HEK293 (cell line): ENCODE measurements at regions of chr2 and their contacts with region 1.

Region 1: GRCh38 chr2:11344342-11344955 is at the start of gene ROCK2:
- H3K4me3 ChIP-seq: peak within 1 kb of the TSS; percentile 64
- H3K27ac ChIP-seq: peak within 1 kb of the TSS; percentile 92
- H3K4me1 ChIP-seq: peaks cover 21% of the 10 kb centered on the region
- CTCF ChIP-seq: no peak

Region 2: DNA sequence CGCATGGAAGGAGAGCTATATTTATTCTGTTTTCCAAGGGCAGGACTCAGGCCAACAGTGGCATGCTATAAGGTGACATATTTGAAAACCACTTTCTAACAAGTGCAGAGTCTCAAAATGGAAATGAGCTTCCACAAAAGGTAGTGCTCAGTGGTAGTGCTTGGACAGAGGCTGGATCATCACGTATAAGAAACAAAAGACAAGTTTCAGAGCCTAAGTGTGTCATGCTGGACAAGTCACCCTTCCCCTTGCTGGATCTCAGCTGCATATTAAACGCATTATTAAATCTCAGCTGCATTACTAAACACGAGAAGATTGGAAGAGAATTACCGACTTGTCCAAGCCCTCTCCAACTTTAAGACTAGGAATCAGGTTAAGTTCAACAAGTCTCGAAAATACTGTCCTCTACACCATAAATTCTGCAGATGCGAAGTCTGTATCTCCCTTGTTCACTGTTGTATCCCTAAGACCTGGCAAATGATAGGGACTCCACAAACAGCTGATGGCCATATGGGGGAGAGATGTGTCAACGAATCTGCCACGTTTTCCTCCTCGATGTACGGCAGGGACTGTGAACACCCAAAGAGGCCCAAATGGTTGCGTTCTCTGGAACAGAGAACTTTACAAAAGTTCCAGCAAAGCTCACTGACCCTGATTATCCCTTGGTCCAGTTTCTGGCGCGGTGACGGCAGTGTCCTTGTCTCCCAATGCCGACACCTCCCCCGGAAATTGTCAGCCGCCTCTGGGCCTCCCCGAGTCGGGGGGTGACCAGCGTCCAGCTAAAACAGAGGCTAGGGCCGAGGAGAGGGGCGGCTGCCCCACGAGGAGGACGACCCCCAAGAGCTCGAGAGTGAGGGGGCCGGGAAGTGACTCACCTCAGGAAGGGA is 655.3 kb before region 1 on chr2:
- CTCF ChIA-PET with region 1: no interaction called
- POLR2A ChIA-PET with region 1: no interaction called
- H3K4me3 ChIP-seq: peak overlapping the region; percentile 84
- H3K27ac ChIP-seq: peak overlapping the region; percentile 57; the same call in 1 of the 2 replicates
- H3K4me1 ChIP-seq: peaks cover 5% of the 10 kb centered on the region; the same call in 1 of the 2 replicates
- CTCF ChIP-seq: no peak

Region 3: DNA sequence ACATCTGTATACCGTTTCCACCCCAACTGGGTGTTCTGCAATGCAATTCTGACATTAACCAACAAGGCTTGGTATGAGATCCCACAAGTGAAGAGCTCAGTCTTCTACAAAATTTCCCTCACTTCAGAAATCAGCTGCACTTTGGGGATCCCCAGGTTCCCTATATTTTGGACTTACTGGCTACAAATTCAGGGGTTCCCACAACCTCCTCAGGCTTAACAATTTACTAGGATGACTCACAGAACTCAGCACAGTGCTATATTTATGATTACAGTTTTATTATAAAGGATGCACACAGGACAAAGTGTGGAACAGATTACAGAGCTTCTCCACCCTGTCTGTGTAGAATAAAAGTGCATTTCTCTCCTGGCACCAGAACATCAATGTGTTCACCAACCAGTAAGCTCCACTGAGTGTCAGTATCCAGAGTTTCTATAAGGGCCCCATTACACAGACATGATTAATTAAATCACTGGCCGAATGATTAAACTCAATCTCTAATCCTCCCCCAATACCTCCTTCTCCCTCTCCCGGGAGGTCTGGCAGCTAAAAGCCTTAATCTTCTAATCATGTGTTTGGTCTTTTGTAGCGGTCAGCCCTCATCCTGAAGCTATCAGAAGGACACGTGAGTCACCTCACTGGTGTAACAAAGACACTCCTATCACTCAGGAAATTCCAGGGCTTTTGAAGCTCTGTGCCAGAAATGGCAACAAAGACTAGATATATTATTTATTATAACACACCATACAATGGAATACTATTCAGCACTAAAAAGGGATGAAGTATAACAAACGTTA is 104.6 kb before region 1 on chr2:
- CTCF ChIA-PET with region 1: no interaction called
- POLR2A ChIA-PET with region 1: no interaction called
- H3K4me3 ChIP-seq: no peak overlapping the region
- H3K27ac ChIP-seq: no peak overlapping the region
- H3K4me1 ChIP-seq: no peaks in the 10 kb centered on the region
- CTCF ChIP-seq: no peak

Region 4: DNA sequence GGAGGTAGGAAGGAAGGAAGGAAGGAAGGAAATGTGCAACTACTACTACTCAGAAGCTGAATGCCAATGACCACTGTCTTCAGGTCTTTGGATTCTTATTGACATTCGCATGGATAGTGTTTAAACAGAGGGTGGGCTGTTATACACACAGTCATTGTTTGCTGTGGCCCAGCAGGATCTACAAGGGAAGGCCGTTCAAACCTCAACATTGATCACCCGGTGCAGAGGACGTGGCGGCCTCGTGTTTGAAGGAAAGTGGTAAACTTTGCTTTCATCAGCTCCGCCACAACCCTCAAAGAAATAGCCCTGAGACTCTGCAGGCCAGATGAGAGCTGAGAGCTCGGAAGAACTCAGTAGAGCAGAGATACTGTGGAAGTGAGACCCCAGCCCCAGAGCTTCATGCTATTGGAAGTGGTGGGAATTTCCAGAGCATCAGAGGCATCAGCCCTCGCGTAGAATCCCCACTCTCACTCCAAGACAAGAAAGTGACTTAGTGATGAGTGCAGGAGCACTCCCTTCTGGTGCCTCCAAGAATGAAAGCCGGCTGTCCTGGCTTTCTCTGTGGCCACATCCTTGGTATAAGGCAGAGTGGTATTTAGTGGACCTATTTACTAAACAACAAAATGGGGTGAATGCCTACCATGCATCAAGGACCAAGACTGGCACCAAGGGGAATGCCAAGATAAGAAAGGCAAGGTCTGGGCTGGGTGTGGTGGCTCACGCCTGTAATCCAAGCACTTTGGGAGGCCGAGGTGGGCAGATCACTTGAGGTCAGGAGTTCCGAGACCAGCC is 10.1 kb after region 1 on chr2:
- CTCF ChIA-PET with region 1: interaction called, 3 read pairs
- POLR2A ChIA-PET with region 1: interaction called, 17 read pairs
- H3K4me3 ChIP-seq: no peak overlapping the region
- H3K27ac ChIP-seq: no peak overlapping the region
- H3K4me1 ChIP-seq: no peaks in the 10 kb centered on the region
- CTCF ChIP-seq: no peak

Region 5: DNA sequence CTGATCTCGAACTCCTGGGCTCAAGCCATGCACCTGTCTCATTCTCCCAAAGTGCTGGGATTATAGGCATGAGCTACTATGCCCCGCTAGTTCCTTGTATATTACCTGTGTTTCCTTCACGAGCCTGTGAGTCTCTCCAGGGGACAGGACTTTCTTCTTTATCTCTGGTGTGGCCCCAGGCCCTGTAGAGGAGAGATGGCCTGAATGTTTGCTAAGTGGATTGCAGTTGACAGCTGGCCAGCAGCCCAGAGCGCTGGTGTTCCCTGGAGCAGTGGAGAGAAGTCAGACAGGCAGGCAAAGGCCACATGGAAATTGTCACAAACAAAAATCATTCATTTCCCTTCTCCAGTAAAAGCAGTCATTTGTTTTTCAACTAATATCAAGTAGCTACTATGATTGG is 419.9 kb after region 1 on chr2:
- CTCF ChIA-PET with region 1: no interaction called
- POLR2A ChIA-PET with region 1: no interaction called
- H3K4me3 ChIP-seq: no peak overlapping the region
- H3K27ac ChIP-seq: no peak overlapping the region
- H3K4me1 ChIP-seq: no peaks in the 10 kb centered on the region
- CTCF ChIP-seq: no peak